IMR-90 (cell line): ENCODE measurements at regions of chr5 and their contacts with region 1.

Region 1: GRCh38 chr5:36305571-36306326 is 4.0 kb upstream of the RANBP3L start:
- DNase-seq: peak; percentile 38
- ATAC-seq: peak; percentile 80
- H3K4me3 ChIP-seq: no peak overlapping the region
- H3K27ac ChIP-seq: no peak overlapping the region
- H3K4me1 ChIP-seq: peaks cover 5% of the 10 kb centered on the region
- H3K27me3 ChIP-seq: peaks cover 8% of the 10 kb centered on the region
- CTCF ChIP-seq: peak; percentile 84
- POLR2A ChIP-seq: no peak
- RAD21 ChIP-seq: peak; percentile 81

Region 2: DNA sequence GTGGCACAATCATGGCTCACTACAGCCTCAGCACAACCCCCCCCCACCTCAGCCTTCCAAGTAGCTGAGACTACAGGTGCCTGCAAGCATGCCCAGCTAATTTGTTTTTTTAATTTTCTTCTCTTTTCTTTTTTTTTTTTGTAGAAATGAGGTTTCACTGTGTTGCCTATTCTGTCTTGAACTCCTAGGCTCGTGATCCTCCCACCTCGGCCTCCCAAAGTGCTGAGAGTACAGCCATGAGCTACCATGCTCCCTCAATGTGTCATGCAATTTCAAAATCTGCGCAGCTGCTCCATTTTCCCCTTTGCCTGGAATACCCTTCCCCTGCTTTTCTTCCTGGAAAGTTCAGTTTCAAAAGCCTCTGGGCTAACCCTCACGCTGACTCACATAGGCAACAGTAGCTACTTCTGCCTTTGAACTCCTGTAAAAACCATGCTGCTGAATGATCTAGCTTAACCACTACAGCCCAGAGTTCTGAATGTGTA is 520.1 kb before region 1 on chr5:
- CTCF ChIA-PET with region 1: no interaction called
- POLR2A ChIA-PET with region 1: no interaction called
- dilution Hi-C with region 1: no loop called
- in situ Hi-C with region 1: no loop called
- intact Hi-C with region 1: loop called (anchors 10 kb)
- DNase-seq: no peak
- ATAC-seq: no peak
- H3K4me3 ChIP-seq: no peak overlapping the region
- H3K27ac ChIP-seq: no peak overlapping the region
- H3K4me1 ChIP-seq: peaks cover 3% of the 10 kb centered on the region; the same call in 1 of the 2 replicates
- H3K27me3 ChIP-seq: no peaks in the 10 kb centered on the region
- CTCF ChIP-seq: no peak
- POLR2A ChIP-seq: no peak
- RAD21 ChIP-seq: no peak

Region 3: DNA sequence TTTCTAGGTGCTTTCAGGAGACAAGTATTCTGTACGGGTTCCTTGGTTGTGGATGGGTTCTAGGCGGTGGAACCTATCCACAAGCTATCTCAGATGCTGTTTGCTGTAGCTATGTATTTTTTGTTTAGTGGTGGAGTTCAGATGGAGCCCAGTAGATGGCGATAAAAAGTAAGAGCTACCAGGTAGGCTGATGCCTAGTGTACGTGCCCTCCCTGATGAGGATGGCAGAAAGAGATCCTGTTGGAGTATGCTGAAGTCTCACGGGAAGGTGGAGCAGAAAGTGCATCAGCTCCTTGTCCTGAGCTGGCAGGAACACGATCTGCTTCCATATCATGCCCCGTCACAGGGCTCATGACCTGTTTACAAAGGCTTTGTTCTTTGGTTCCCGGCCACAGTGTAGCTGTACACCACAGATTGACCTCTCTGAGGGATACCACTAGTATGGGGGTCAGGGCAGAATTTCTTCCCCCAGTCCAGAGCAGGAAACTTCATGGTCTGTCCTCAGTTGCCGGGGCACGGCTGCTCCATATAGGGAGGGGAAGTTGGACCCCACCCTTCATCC is 226.5 kb before region 1 on chr5:
- CTCF ChIA-PET with region 1: interaction called, 9 read pairs
- POLR2A ChIA-PET with region 1: no interaction called
- dilution Hi-C with region 1: no loop called
- in situ Hi-C with region 1: no loop called
- intact Hi-C with region 1: loop called (anchors 1 kb)
- DNase-seq: peak; percentile 44
- ATAC-seq: peak; percentile 97
- H3K4me3 ChIP-seq: no peak overlapping the region
- H3K27ac ChIP-seq: no peak overlapping the region
- H3K4me1 ChIP-seq: no peaks in the 10 kb centered on the region
- H3K27me3 ChIP-seq: peaks cover 5% of the 10 kb centered on the region
- CTCF ChIP-seq: peak; percentile 60
- POLR2A ChIP-seq: no peak
- RAD21 ChIP-seq: peak; percentile 61

Region 4: GRCh38 chr5:36108758-36109460 is 196.8 kb before region 1 on chr5:
- CTCF ChIA-PET with region 1: no interaction called
- POLR2A ChIA-PET with region 1: no interaction called
- dilution Hi-C with region 1: no loop called
- in situ Hi-C with region 1: no loop called
- intact Hi-C with region 1: no loop called
- DNase-seq: no peak
- ATAC-seq: 0 out of 2 replicates have a peak, but pooled peaks have one; percentile 47
- H3K4me3 ChIP-seq: no peak overlapping the region
- H3K27ac ChIP-seq: no peak overlapping the region
- H3K4me1 ChIP-seq: no peaks in the 10 kb centered on the region; the same call in 1 of the 2 replicates
- H3K27me3 ChIP-seq: no peaks in the 10 kb centered on the region
- CTCF ChIP-seq: no peak
- POLR2A ChIP-seq: no peak
- RAD21 ChIP-seq: no peak

Region 5: DNA sequence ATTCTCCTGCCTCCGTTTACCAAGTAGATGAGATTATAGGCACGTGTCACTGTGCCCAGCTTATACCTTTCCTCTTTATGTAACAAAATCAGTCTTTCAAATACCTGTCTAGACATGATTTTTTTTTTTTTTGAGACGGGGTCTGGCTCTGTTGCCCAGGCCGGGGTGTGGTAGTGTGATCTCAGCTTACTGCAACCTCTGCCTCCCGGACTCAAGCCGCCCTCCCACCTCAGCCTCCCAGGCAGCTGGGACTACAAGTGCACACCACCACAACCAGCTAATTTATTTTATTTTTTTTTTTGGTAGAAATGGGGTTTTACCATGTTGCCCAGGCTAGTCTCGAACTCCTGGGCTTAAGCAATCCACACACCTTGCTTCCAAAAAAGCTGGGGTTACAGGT is 77.2 kb before region 1 on chr5:
- CTCF ChIA-PET with region 1: no interaction called
- POLR2A ChIA-PET with region 1: no interaction called
- dilution Hi-C with region 1: no loop called
- in situ Hi-C with region 1: loop called (anchors 10 kb)
- intact Hi-C with region 1: no loop called
- DNase-seq: no peak
- ATAC-seq: no peak
- H3K4me3 ChIP-seq: no peak overlapping the region
- H3K27ac ChIP-seq: peak overlapping the region; percentile 75
- H3K4me1 ChIP-seq: peaks cover 5% of the 10 kb centered on the region
- H3K27me3 ChIP-seq: no peaks in the 10 kb centered on the region
- CTCF ChIP-seq: no peak
- POLR2A ChIP-seq: no peak
- RAD21 ChIP-seq: no peak

Region 6: GRCh38 chr5:36264202-36264760 is 41.5 kb before region 1 on chr5:
- CTCF ChIA-PET with region 1: interaction called, 7 read pairs
- POLR2A ChIA-PET with region 1: no interaction called
- dilution Hi-C with region 1: no loop called
- in situ Hi-C with region 1: no loop called
- intact Hi-C with region 1: loop called (anchors 1 kb)
- DNase-seq: no peak
- ATAC-seq: no peak
- H3K4me3 ChIP-seq: no peak overlapping the region
- H3K27ac ChIP-seq: no peak overlapping the region
- H3K4me1 ChIP-seq: no peaks in the 10 kb centered on the region
- H3K27me3 ChIP-seq: peaks cover 1% of the 10 kb centered on the region; the same call in 1 of the 2 replicates
- CTCF ChIP-seq: no peak
- POLR2A ChIP-seq: no peak
- RAD21 ChIP-seq: no peak